H1 (cell line): ENCODE measurements at regions of chr9 and their contacts with region 1.

Region 1: GRCh38 chr9:117411548-117411947 is 3.3 kb downstream of the ASTN2 start:
- DNase-seq: peak in 1 of 2 experiments; percentile 86
- H3K4me3 ChIP-seq: no peak overlapping the region
- H3K27ac ChIP-seq: no peak overlapping the region
- H3K4me1 ChIP-seq: peaks cover 13 to 17% (median 15%) of the 10 kb centered on the region in 4 experiments
- H3K27me3 ChIP-seq: peaks cover 12 to 38% (median 35%) of the 10 kb centered on the region in 4 experiments
- CTCF ChIP-seq: peak; percentile 97 to 99 (median 99)
- EP300 ChIP-seq: no peak
- POLR2A ChIP-seq: no peak
- RAD21 ChIP-seq: peak; percentile 94 to 98

Region 2: DNA sequence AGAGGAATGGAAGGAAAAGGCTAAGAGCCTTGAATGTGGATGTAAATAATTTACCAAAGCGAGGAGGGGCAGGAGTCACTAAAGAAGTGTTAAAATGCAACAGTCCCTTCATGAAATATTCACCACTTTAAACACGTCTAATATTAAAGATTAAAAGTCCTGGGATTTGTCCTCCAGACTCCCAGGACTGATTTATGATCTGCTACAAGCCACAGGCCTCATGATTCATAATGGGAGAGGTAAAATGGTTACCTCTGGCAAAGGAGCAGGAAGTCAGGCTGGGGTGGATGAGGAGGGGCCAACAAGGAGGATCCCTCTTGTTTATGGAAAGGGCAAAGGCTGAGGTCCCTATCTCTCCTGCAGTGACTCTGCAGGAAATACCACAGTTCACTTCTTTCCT is 432.1 kb before region 1 on chr9:
- CTCF ChIA-PET with region 1: no interaction called
- POLR2A ChIA-PET with region 1: no interaction called
- DNase-seq: no peak
- H3K4me3 ChIP-seq: no peak overlapping the region
- H3K27ac ChIP-seq: no peak overlapping the region
- H3K4me1 ChIP-seq: peaks cover 0 to 4% (median 0%) of the 10 kb centered on the region in 4 experiments; a peak in 1 of 7 replicates
- H3K27me3 ChIP-seq: no peaks in the 10 kb centered on the region; a peak in 1 of 7 replicates
- CTCF ChIP-seq: no peak
- EP300 ChIP-seq: no peak
- POLR2A ChIP-seq: no peak
- RAD21 ChIP-seq: no peak

Region 3: GRCh38 chr9:117169089-117169621 is 242.4 kb before region 1 on chr9:
- CTCF ChIA-PET with region 1: interaction called, 10 read pairs
- POLR2A ChIA-PET with region 1: no interaction called
- DNase-seq: no peak
- H3K4me3 ChIP-seq: no peak overlapping the region
- H3K27ac ChIP-seq: no peak overlapping the region
- H3K4me1 ChIP-seq: peaks cover 0 to 3% (median 1%) of the 10 kb centered on the region in 4 experiments; a peak in 5 of 7 replicates
- H3K27me3 ChIP-seq: no peaks in the 10 kb centered on the region; a peak in 1 of 7 replicates
- CTCF ChIP-seq: no peak
- EP300 ChIP-seq: no peak
- POLR2A ChIP-seq: no peak
- RAD21 ChIP-seq: no peak

Region 4: DNA sequence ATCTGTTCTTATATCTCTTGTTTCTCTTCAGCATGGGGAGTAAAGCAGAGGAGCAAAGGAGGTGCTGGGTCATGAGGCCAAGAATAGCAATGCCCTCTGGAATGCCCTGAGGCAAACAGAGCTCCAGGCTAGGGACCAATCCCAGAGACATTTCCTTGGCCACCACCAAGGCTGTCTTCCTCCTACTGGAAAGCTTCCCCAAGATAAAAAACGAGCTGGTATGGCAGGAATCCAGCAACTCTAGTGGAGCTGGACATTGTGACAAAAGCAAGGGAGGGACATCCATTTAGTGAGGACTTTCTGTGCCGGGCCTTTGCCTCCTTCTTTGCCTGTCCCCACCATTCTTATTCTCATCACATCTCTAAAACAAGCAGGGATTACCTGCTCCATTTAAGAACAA is 158.3 kb before region 1 on chr9:
- CTCF ChIA-PET with region 1: interaction called, 19 read pairs
- POLR2A ChIA-PET with region 1: no interaction called
- DNase-seq: no peak
- H3K4me3 ChIP-seq: no peak overlapping the region
- H3K27ac ChIP-seq: no peak overlapping the region
- H3K4me1 ChIP-seq: peaks cover 0 to 1% (median under 1%) of the 10 kb centered on the region in 4 experiments; a peak in 4 of 7 replicates
- H3K27me3 ChIP-seq: no peaks in the 10 kb centered on the region
- CTCF ChIP-seq: no peak
- EP300 ChIP-seq: no peak
- POLR2A ChIP-seq: no peak
- RAD21 ChIP-seq: no peak

Region 5: GRCh38 chr9:117303643-117304230 is 107.8 kb before region 1 on chr9:
- CTCF ChIA-PET with region 1: interaction called, 10 read pairs
- POLR2A ChIA-PET with region 1: no interaction called
- DNase-seq: no peak
- H3K4me3 ChIP-seq: no peak overlapping the region
- H3K27ac ChIP-seq: no peak overlapping the region
- H3K4me1 ChIP-seq: peaks cover 0 to 6% (median 0%) of the 10 kb centered on the region in 4 experiments; a peak in 2 of 7 replicates
- H3K27me3 ChIP-seq: no peaks in the 10 kb centered on the region
- CTCF ChIP-seq: no peak
- EP300 ChIP-seq: no peak
- POLR2A ChIP-seq: no peak
- RAD21 ChIP-seq: no peak

Region 6: GRCh38 chr9:117392992-117393391 is 18.6 kb before region 1 on chr9:
- CTCF ChIA-PET with region 1: interaction called, 165 read pairs
- POLR2A ChIA-PET with region 1: interaction called, 3 read pairs
- DNase-seq: no peak
- H3K4me3 ChIP-seq: no peak overlapping the region
- H3K27ac ChIP-seq: no peak overlapping the region
- H3K4me1 ChIP-seq: peaks cover 0 to 14% (median 3%) of the 10 kb centered on the region in 4 experiments; a peak in 4 of 7 replicates
- H3K27me3 ChIP-seq: no peaks in the 10 kb centered on the region
- CTCF ChIP-seq: peak; percentile 62 to 74 (median 71)
- EP300 ChIP-seq: no peak
- POLR2A ChIP-seq: no peak
- RAD21 ChIP-seq: peak; percentile 42 to 57

Region 7: DNA sequence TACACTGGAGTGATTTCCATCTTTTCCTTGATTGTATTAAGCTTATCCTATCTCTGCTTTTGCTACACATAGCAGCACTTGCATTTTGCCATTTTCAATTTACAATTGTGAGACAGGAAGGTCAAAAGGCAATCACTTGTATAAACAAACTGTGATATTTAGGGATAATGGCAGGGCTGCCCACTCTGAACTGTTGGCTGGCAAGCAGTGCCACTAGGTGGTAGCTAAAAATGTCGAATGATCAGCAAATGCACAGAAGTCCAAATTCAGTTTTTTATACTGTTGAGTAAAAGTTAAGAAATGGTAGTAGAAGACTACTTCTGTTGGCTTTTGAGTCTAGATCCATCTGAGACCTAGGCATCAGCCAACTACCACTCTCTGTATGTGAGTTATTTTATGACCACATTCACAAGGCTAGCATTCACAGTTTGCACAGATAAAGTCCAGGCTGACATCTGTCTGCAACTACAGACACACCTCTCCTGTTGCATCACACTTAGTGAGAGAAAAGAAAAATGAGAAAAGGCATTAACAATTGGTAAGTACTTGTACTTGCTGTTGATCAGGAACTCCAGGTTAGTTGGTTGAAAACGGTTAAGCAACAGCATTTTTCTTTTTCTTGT is 112.1 kb after region 1 on chr9:
- CTCF ChIA-PET with region 1: no interaction called
- POLR2A ChIA-PET with region 1: no interaction called
- DNase-seq: no peak
- H3K4me3 ChIP-seq: no peak overlapping the region
- H3K27ac ChIP-seq: no peak overlapping the region
- H3K4me1 ChIP-seq: no peaks in the 10 kb centered on the region
- H3K27me3 ChIP-seq: no peaks in the 10 kb centered on the region
- CTCF ChIP-seq: no peak
- EP300 ChIP-seq: no peak
- POLR2A ChIP-seq: no peak
- RAD21 ChIP-seq: no peak